ENCODE measurements at regions of chr16 and their contacts with region 1.

Region 1: DNA sequence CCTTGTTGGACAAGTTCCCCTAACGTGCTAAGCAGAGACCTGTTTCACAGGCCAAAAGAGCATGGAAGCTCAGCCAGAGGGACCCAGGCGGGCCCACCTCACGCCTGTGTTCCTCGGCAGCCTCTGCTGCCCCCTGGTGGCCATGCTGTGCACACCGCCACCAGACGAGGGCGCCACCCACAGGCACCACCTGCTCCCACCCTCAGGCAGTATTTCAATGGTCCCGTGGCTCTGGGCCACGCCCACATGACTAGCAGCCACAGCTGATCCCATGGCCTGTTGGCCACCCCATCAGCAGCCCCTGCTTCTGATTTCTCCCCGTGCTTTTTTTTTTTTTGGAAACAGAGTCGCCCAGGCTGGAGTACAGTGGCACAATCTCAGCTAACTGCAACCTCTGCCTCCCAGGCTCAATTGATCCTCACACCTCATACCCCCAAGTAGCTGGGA is 18.9 kb downstream of the MPG start:
- DNase-seq: peak; percentile 93 to 97
- ATAC-seq: peak; percentile 93 to 95 (median 94)
- H3K4me3 ChIP-seq: no peak overlapping the region
- H3K27ac ChIP-seq: peak overlapping the region; percentile 44
- H3K4me1 ChIP-seq: peaks cover 37% of the 10 kb centered on the region
- H3K27me3 ChIP-seq: no peaks in the 10 kb centered on the region
- CTCF ChIP-seq: peak; percentile 99

Region 2: DNA sequence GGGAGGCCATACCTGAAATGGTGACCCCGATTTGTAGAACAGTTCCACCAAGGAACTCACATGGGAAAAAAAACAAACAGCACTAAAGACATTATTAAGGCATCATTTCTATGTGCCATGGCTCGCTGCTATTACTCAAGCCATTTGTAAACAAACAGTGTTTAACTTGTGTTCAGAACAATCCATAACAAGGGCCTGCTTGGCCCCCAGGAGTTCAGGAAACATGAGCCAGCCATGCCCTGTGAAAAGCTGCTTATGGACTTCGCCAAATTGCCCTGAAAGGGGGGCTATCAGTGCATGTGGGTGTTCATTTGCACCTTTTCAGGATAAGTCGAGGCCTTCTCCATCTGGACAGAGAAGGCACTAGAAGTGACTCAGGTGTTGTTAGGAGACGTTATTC is 51.5 kb before region 1 on chr16:
- intact Hi-C with region 1: no loop called
- DNase-seq: no peak
- ATAC-seq: no peak
- H3K4me3 ChIP-seq: no peak overlapping the region
- H3K27ac ChIP-seq: no peak overlapping the region
- H3K4me1 ChIP-seq: no peaks in the 10 kb centered on the region
- H3K27me3 ChIP-seq: no peaks in the 10 kb centered on the region
- CTCF ChIP-seq: no peak

Region 3: DNA sequence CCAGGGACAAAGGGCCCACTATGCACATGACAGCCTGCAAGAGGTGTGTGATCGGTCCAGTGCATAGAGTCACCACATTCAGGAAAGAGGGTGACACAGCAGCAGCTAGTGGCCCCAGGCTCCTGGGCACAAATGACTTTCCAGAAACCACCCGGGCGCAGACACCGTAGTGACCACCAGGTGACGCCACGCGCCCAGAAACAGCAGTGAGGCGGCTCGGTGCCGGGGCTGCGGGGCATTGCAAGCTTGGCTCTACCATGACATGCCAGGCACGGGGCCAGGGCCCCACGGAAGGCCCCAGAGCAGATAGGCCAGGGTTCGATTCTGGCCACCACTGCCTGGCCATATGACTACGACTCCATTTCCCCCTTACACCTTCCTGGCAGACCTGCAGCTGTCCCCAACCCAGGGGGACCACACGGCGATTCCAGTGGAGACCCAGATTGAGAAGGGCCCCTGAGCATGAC is 31.3 kb before region 1 on chr16:
- intact Hi-C with region 1: loop called (anchors 1 to 2 kb)
- DNase-seq: peak; percentile 88 to 94
- ATAC-seq: peak; percentile 75 to 87 (median 82)
- H3K4me3 ChIP-seq: no peak overlapping the region
- H3K27ac ChIP-seq: no peak overlapping the region
- H3K4me1 ChIP-seq: peaks cover 43% of the 10 kb centered on the region
- H3K27me3 ChIP-seq: no peaks in the 10 kb centered on the region
- CTCF ChIP-seq: peak; percentile 98

Measured in psoas muscle (tissue), 8 donors.